ENCODE measurements at regions of chr3 and their contacts with region 1.

Region 1: DNA sequence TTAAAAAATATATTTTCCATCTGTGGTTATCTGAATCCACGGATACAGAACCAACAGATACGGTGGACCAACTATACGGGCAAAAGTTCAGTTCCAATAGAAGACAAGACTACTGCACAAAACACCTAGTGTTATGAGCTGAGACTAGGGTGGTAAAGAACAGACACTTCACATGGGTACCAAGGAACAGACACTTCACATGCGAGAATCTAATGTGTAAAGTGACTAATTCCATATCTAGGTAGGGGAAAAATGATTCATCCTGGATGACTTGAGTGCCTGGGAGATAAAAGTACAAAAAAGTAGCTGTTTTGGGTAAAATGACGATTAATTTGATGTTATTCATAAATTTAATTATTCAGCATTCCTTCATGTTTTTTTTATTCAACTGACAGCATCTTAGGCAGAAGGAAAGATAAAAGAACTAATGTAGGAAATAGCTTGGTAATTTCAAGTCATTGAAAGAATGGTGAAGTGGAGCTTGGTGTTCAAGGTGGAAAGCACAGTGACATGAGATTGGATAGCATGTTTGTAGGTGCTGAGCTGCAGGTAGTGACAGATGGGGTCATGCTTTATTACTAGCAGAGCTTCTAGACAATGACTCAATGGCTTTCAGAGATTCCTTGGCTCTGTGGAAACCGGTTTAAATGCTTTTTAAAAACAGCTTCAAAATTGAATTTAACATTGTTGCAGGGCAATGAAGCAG is 5.2 kb downstream of the CD200 start:
- DNase-seq: no peak
- ATAC-seq: peak; percentile 14
- H3K4me3 ChIP-seq: peak overlapping the region; percentile 23; the same call in 1 of the 2 replicates
- H3K27ac ChIP-seq: no peak overlapping the region
- H3K4me1 ChIP-seq: no peaks in the 10 kb centered on the region; the same call in 1 of the 2 replicates
- H3K27me3 ChIP-seq: no peaks in the 10 kb centered on the region
- CTCF ChIP-seq: no peak
- EP300 ChIP-seq: no peak
- POLR2A ChIP-seq: no peak
- RAD21 ChIP-seq: no peak

Region 2: DNA sequence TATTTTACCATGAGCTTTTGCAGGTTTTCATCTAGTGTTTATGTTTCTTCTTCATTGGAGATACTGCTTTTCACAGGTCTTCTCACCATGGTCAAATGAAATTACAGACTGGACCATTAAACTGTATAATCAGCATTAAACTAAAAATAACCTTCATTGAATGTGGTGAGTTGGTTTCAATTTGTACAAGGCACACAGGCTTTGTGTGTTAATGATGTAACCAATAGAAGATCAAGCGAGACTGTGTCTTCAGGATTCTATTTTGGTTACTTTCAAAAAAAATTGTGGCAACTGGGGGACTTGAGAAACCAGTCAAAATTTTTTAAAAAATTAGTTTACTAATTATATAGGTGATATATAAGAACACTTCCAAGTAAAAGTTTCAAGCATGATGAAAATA is 150.9 kb before region 1 on chr3:
- CTCF ChIA-PET with region 1: no interaction called
- POLR2A ChIA-PET with region 1: no interaction called
- RAD21 ChIA-PET with region 1: no interaction called
- SMC1A ChIA-PET with region 1: no interaction called
- in situ Hi-C with region 1: no loop called
- intact Hi-C with region 1: no loop called
- DNase-seq: no peak
- ATAC-seq: peak; percentile 46; the same call in 2 of the 3 replicates
- H3K4me3 ChIP-seq: no peak overlapping the region
- H3K27ac ChIP-seq: no peak overlapping the region
- H3K4me1 ChIP-seq: peaks cover 3% of the 10 kb centered on the region; the same call in 1 of the 2 replicates
- H3K27me3 ChIP-seq: no peaks in the 10 kb centered on the region
- CTCF ChIP-seq: no peak
- EP300 ChIP-seq: no peak
- POLR2A ChIP-seq: no peak
- RAD21 ChIP-seq: no peak

Region 3: DNA sequence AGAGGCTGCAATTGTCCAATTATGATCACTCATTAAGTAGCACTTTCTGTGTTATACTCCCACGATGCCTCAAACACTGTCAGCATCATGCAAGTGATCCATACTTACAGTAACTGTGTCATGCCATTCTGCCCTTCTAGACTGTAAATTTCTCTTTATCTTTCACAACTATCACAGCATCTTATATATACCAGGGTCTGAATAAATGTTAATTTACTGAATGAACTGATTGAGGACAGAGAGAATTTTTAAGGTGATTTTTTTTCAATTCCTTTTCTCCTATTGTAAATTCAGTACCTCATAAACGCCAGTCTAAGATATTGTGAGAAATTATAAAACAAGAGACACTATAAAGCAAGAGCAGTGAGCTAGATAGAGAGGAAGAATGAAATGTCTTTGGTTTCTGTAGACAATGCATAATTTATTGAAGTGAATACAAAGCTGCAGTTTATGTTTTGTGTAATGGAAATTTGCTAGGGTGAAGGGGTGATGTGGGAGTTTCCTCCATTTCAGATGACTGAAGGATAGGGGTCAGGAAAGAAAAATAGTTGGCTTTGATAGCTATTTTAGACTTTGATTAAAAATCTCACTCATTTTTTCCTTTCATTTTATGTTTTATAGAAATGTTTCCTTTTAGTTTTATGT is 12.1 kb after region 1 on chr3:
- CTCF ChIA-PET with region 1: interaction called, 13 read pairs
- POLR2A ChIA-PET with region 1: interaction called, 29 read pairs
- RAD21 ChIA-PET with region 1: interaction called, 19 read pairs
- SMC1A ChIA-PET with region 1: interaction called, 28 read pairs
- in situ Hi-C with region 1: no loop called
- intact Hi-C with region 1: no loop called
- DNase-seq: no peak
- ATAC-seq: no peak
- H3K4me3 ChIP-seq: no peak overlapping the region
- H3K27ac ChIP-seq: no peak overlapping the region
- H3K4me1 ChIP-seq: peaks cover 9% of the 10 kb centered on the region
- H3K27me3 ChIP-seq: no peaks in the 10 kb centered on the region
- CTCF ChIP-seq: no peak
- EP300 ChIP-seq: no peak
- POLR2A ChIP-seq: no peak
- RAD21 ChIP-seq: no peak

Measured in GM12878 (cell line).